Caco-2 (cell line): ENCODE measurements at regions of chr3 and their contacts with region 1.

Region 1: DNA sequence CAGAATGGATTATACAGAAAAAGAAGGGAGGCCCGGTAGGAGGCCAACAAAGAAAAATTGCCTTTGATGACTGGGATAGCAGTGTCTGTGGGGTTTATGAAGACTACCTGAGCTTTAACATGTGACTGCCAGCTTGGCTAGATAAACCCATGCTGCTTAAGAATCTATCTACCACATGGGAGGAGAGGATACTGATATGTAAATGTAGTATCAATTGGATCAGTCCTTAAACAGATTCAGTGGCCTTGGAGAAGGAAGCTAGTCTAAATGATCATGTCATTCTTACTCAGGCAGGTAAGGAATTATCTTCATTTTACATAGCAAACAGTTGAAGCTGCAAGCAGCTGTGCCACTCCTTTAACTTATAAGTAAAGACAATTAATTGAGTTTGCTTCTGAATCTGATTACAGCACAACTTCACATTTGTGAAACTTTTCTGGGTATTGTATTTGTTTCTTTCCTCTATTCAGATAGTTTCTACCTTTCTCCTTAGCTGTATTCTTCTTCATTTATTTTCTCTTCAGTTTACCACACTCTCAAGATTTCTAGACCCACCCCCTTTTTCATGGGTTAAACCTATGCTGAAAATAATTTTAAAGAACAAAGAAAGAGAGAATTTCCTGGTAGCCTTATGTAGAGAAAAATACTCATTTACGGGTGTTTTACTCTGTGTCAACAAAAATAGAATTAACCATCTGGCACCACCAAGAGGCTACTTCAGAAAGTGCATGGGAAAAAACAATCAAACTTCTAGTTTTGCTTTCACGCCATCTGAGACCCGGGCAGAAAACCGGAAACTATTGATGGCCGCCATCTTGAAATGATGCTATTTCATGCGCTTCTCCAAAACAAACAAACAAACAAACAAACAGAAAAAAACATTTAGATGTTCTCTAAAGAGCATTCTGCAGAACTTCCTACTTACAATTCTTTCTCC is 49.8 kb upstream of the SYNPR start:
- DNase-seq: peak; percentile 37 to 41
- H3K4me3 ChIP-seq: no peak overlapping the region
- H3K4me3 Mint-ChIP-seq: no peak overlapping the region
- H3K27ac Mint-ChIP-seq: no peak overlapping the region
- H3K4me1 ChIP-seq: no peaks in the 10 kb centered on the region
- H3K4me1 Mint-ChIP-seq: no peaks in the 10 kb centered on the region
- H3K27me3 ChIP-seq: no peaks in the 10 kb centered on the region
- H3K27me3 Mint-ChIP-seq: peaks cover 5% of the 10 kb centered on the region
- CTCF ChIP-seq: peak; percentile 47 to 54

Region 2: GRCh38 chr3:62622553-62623193 is 605.7 kb before region 1 on chr3:
- CTCF ChIA-PET with region 1: no interaction called
- POLR2A ChIA-PET with region 1: no interaction called
- intact Hi-C with region 1: loop called (anchors 1 kb)
- DNase-seq: peak in 1 of 2 experiments; percentile 44
- H3K4me3 ChIP-seq: no peak overlapping the region
- H3K4me3 Mint-ChIP-seq: no peak overlapping the region
- H3K27ac Mint-ChIP-seq: no peak overlapping the region
- H3K4me1 ChIP-seq: no peaks in the 10 kb centered on the region
- H3K4me1 Mint-ChIP-seq: no peaks in the 10 kb centered on the region
- H3K27me3 ChIP-seq: no peaks in the 10 kb centered on the region
- H3K27me3 Mint-ChIP-seq: peaks cover 14% of the 10 kb centered on the region
- CTCF ChIP-seq: peak; percentile 52 to 59